ENCODE measurements at regions of chr6 and their contacts with region 1.

Region 1: DNA sequence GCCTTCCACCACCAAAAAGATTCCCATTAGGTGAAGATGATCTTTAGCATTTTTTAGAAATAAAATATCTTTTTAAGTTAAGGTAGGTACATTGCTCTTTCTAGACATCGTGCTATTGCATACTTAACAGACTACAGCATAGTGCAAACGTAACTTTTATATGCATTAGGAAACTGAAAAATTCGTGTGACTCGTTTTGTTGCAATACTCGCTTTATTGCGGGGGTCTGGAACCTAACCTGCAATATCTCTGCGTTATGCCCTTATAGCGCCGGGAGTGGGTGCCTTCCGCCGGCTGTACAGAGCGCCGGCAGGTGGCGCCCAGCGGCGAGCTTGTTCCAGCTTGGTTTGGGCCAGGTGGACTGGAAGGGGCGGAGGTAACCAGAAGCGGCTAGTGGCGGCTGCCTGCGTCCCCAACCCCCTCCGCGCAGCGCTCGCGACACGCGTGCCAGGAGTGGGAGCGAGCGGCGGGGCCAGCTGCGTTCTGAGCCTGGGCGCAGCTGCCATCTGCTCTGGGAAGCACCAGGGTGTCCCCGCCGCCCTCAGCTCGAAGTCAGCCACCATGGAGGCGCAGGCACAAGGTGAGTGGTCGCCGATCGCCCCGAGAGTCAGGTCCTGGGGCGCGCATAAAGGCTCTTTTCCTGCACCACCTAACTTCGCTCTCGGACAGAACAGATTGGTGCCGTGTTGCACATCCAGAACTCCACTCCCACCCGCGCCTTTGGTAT is at the start of gene TPD52L1:
- DNase-seq: peak; percentile 76
- H3K4me3 ChIP-seq: peak within 1 kb of the TSS; percentile 71
- H3K27ac ChIP-seq: no peak within 1 kb of the TSS
- H3K4me1 ChIP-seq: peaks cover 13% of the 10 kb centered on the region
- H3K27me3 ChIP-seq: no peaks in the 10 kb centered on the region
- total RNA-seq, gene TPD52L1: 5.1 and 5.7 TPM in 2 replicates

Region 2: DNA sequence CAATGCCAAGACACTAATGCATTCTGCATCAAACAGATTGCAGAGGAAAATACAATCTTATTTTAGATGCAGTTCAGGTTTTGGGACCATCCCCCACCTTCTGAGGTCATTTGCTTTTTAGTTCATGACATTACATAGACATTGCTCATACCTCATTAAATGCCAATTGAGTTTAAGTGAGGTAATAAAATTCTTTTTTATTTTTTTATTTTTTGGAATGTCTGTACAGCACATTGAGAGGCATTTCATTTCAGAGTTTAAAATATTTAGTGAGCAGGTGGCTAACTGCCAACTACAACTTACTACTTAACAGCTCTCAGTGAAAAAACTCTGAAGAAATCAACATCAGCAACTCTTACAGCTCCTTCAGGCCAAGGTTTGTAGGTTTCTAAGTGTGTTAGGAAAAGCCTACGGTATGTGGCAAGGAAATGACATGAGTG is 673.5 kb before region 1 on chr6:
- in situ Hi-C with region 1: no loop called
- DNase-seq: no peak
- H3K4me3 ChIP-seq: no peak overlapping the region
- H3K27ac ChIP-seq: no peak overlapping the region
- H3K4me1 ChIP-seq: no peaks in the 10 kb centered on the region
- H3K27me3 ChIP-seq: no peaks in the 10 kb centered on the region

Region 3: GRCh38 chr6:125294925-125295324 is 141.4 kb after region 1 on chr6:
- in situ Hi-C with region 1: loop called (anchors 10 kb)
- DNase-seq: no peak
- H3K4me3 ChIP-seq: no peak overlapping the region
- H3K27ac ChIP-seq: no peak overlapping the region
- H3K4me1 ChIP-seq: peaks cover 11% of the 10 kb centered on the region
- H3K27me3 ChIP-seq: no peaks in the 10 kb centered on the region

Region 4: GRCh38 chr6:125753218-125753936 is 599.8 kb after region 1 on chr6:
- in situ Hi-C with region 1: loop called (anchors 25 kb)
- DNase-seq: peak; percentile 43
- H3K4me3 ChIP-seq: no peak overlapping the region
- H3K27ac ChIP-seq: no peak overlapping the region
- H3K4me1 ChIP-seq: peaks cover 4% of the 10 kb centered on the region
- H3K27me3 ChIP-seq: peaks cover 66% of the 10 kb centered on the region

Measured in GM23248 (cell line).